B cell (primary cell): ENCODE measurements at regions of chr22 and their contacts with region 1.

Region 1: GRCh38 chr22:41946629-41947423 is at the start of gene CENPM:
- DNase-seq: peak; percentile 93
- ATAC-seq: peak; percentile 91
- H3K4me3 ChIP-seq: peak within 1 kb of the TSS; percentile 38 to 86 (median 68)
- H3K4me3 Mint-ChIP-seq: peak within 1 kb of the TSS; percentile 97
- H3K27ac ChIP-seq: peak within 1 kb of the TSS in 1 of 2 donors; percentile 11
- H3K27ac Mint-ChIP-seq: peak within 1 kb of the TSS; percentile 73
- H3K4me1 ChIP-seq: peaks cover 20 to 44% of the 10 kb centered on the region in 2 donors
- H3K4me1 Mint-ChIP-seq: peaks cover 39% of the 10 kb centered on the region
- H3K27me3 ChIP-seq: peaks cover 0 to 10% (median 0%) of the 10 kb centered on the region in 4 experiments
- H3K27me3 Mint-ChIP-seq: no peaks in the 10 kb centered on the region
- CTCF ChIP-seq: no peak
- total RNA-seq, gene CENPM: 26.0 and 30.7 TPM in 2 replicates

Region 2: DNA sequence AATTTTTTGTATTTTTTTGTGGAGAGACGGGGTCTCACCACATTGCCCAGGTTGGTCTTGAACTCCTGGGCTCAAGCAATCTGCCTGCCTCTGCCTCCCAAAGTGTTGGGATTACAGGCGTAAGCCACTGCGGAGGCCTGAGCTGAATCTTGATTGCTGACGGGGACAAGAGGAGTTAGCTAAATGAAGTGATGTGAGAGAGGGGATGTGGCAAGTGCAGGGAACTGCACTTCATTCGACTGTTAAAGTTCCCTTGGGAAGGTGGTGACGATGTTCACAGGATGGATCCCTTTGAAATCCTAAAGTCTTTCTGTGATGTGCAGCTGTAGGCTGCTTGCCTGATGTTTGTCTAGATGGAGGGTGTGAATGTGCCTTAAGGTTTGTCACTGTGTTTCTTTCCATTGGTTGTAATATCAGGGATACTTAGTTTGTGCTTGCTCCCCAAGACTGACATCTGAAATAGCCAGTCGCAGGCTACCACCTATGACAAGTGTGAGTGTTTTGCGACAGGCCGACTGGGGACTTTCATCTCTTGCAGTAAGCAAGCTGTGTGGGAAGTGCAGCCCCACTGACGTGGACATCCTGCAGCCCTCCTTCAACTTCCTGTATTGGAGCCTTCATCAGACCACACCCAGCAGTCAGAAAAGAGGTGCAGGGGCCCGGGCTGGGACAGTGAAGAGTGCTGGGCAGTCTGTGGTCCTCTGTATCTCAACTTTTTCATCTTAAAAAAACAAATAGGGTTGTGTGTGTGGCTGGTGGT is 165.9 kb before region 1 on chr22:
- CTCF ChIA-PET with region 1: no interaction called
- POLR2A ChIA-PET with region 1: no interaction called
- intact Hi-C with region 1: loop called (anchors 2 kb)
- DNase-seq: peak; percentile 94
- ATAC-seq: peak; percentile 96
- H3K4me3 ChIP-seq: peak overlapping the region; percentile 47 to 76 (median 60)
- H3K4me3 Mint-ChIP-seq: peak overlapping the region; percentile 88
- H3K27ac ChIP-seq: peak overlapping the region; percentile 90 to 95
- H3K27ac Mint-ChIP-seq: peak overlapping the region; percentile 98
- H3K4me1 ChIP-seq: peaks cover 26 to 31% of the 10 kb centered on the region in 2 donors
- H3K4me1 Mint-ChIP-seq: peaks cover 37% of the 10 kb centered on the region
- H3K27me3 ChIP-seq: no peaks in the 10 kb centered on the region
- H3K27me3 Mint-ChIP-seq: no peaks in the 10 kb centered on the region
- CTCF ChIP-seq: no peak

Region 3: DNA sequence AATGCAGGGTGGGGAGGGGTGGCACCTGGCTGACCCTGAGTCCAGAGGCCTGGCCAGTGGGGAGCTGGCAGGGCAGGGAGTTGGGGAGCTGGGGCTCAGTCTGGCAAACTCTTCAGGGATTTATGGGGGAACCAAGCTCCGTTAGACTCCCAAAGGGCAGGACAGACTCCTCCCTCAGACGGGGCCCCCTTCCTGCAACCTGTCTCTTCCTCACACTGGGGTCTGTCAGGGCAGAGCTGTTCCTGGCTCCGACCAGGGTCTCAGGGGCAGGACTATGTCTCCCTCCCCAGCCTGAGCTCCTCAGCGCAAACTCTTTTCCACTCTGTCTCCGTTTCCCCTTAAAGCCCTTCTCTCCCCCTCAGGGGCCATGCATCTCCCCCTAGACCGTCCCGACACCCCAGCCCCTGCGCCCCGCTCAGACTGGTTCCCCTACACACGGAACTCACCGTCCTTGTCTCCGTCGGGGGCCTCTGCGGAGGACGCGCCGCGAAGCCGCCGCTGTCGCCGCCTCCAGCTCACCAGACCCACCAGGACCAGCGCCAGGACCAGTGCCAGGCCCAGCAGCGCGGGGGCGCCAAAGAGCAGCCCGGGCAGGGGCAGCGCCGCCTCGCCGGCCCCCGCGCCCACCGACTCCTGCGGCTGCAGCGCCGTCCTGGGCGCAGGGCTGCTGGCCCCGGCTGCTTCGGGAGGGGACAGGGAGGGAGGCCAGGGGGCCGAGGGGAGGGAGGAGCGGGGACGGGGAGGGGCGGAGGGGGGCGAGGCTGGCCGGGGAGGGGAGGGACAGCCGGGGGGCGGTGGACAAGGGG is 21.0 kb before region 1 on chr22:
- CTCF ChIA-PET with region 1: interaction called, 499 read pairs
- POLR2A ChIA-PET with region 1: interaction called, 960 read pairs
- intact Hi-C with region 1: no loop called
- DNase-seq: peak; percentile 88
- ATAC-seq: peak; percentile 46
- H3K4me3 ChIP-seq: peak overlapping the region; percentile 59 to 96 (median 88)
- H3K4me3 Mint-ChIP-seq: peak overlapping the region; percentile 100
- H3K27ac ChIP-seq: peak overlapping the region; percentile 94 to 95
- H3K27ac Mint-ChIP-seq: peak overlapping the region; percentile 99
- H3K4me1 ChIP-seq: peaks cover 70 to 86% of the 10 kb centered on the region in 2 donors
- H3K4me1 Mint-ChIP-seq: peaks cover 67% of the 10 kb centered on the region
- H3K27me3 ChIP-seq: no peaks in the 10 kb centered on the region
- H3K27me3 Mint-ChIP-seq: no peaks in the 10 kb centered on the region
- CTCF ChIP-seq: peak; percentile 83

Region 4: DNA sequence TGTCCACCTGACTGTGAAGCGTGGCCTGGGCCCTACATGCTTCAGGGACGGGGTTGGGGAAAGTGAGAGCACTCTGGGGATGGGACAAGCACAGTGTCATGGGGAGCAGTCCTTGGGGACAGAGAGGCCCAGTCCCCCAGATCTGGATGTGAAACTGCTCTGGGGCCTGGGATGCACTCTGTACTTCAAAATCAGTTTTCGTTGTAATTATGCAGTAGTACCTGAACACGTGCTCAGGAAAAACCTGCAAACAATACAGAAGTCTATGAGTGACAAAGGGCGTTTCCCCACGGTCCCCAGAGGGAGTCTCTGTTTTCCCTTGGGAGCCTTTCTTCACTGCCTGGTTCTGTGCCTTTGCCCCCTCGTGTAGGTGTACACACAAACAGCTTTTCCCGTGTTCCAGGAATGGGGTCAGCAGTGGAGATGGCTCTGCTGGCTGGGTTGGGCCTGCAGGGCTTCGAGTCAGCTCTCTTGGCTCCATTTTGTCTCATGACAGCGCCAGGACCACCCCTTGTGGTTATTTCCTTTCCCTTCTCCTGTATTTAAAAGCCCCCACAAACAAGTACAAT is 15.0 kb before region 1 on chr22:
- CTCF ChIA-PET with region 1: interaction called, 499 read pairs
- POLR2A ChIA-PET with region 1: interaction called, 960 read pairs
- intact Hi-C with region 1: no loop called
- DNase-seq: peak; percentile 91
- ATAC-seq: peak; percentile 39
- H3K4me3 ChIP-seq: no peak overlapping the region
- H3K4me3 Mint-ChIP-seq: peak overlapping the region; percentile 70
- H3K27ac ChIP-seq: peak overlapping the region; percentile 99
- H3K27ac Mint-ChIP-seq: peak overlapping the region; percentile 99
- H3K4me1 ChIP-seq: peaks cover 94 to 100% of the 10 kb centered on the region in 2 donors
- H3K4me1 Mint-ChIP-seq: peaks cover 82% of the 10 kb centered on the region
- H3K27me3 ChIP-seq: no peaks in the 10 kb centered on the region
- H3K27me3 Mint-ChIP-seq: no peaks in the 10 kb centered on the region
- CTCF ChIP-seq: no peak

Region 5: GRCh38 chr22:41998361-41999275 is 51.8 kb after region 1 on chr22 and contains the start of gene WBP2NL:
- CTCF ChIA-PET with region 1: no interaction called
- POLR2A ChIA-PET with region 1: interaction called, 9 read pairs
- intact Hi-C with region 1: loop called (anchors 1 kb)
- DNase-seq: peak; percentile 95
- ATAC-seq: peak; percentile 100
- H3K4me3 ChIP-seq: peak within 1 kb of the TSS; percentile 36 to 88 (median 76)
- H3K4me3 Mint-ChIP-seq: peak within 1 kb of the TSS; percentile 99
- H3K27ac ChIP-seq: peak within 1 kb of the TSS; percentile 72 to 81
- H3K27ac Mint-ChIP-seq: peak within 1 kb of the TSS; percentile 99
- H3K4me1 ChIP-seq: peaks cover 15 to 23% of the 10 kb centered on the region in 2 donors
- H3K4me1 Mint-ChIP-seq: peaks cover 25% of the 10 kb centered on the region
- H3K27me3 ChIP-seq: peaks cover 0 to 10% (median 3%) of the 10 kb centered on the region in 4 experiments
- H3K27me3 Mint-ChIP-seq: no peaks in the 10 kb centered on the region
- CTCF ChIP-seq: no peak
- total RNA-seq, gene WBP2NL: 10.1 and 10.4 TPM in 2 replicates